HEK293T (cell line): ENCODE measurements at regions of chr11 and their contacts with region 1.

Region 1: GRCh38 chr11:66069715-66070603 is at the start of gene PACS1:
- DNase-seq: peak; percentile 72

Region 2: GRCh38 chr11:65973439-65974110 is 96.4 kb before region 1 on chr11:
- CTCF ChIA-PET with region 1: no interaction called
- POLR2A ChIA-PET with region 1: no interaction called
- DNase-seq: no peak

Region 3: DNA sequence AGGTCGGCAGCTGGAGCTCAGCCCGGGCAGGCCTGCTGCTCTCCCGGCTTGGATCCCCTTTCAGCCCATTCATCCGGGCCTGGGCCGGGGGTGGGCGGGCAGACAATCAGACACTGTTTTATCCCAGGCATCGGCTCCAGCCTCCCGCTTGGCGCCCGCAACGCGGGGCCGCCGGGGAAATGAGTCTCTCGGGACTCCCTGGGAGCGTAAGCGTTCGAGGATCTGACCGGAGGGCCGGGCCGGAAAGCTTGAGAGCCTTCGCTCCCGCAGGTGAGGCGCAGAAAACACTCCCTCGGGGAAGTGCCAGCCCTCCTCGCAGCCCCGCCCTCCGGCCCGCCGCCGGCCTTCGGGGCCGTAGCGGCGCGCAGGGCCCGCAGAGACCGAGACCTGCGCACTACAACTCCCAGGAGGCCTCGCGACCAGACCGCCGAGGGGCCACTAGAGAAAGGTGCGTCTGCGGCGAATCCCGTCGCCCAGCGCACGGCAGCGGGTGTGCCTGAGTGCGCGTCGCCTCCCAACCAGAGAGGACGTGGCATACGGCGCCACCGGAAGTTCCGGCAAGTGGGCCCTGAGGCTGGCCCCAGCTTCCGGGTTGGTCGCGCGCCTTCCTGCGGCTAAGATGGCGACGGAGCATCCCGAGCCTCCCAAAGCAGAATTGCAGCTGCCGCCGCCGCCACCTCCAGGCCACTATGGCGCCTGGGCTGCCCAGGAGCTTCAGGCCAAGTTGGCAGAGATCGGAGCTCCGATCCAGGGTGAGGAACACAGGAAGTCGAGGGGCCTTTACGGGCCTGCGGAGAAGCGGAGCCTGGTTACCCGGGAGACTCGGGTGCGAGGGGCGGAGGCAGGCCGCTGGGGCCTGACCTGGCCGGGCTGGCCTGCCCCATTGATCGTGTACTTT is 17.9 kb before region 1 on chr11 and contains the start of gene SF3B2:
- CTCF ChIA-PET with region 1: interaction called, 24 read pairs
- POLR2A ChIA-PET with region 1: interaction called, 34 read pairs
- DNase-seq: peak; percentile 96

Region 4: DNA sequence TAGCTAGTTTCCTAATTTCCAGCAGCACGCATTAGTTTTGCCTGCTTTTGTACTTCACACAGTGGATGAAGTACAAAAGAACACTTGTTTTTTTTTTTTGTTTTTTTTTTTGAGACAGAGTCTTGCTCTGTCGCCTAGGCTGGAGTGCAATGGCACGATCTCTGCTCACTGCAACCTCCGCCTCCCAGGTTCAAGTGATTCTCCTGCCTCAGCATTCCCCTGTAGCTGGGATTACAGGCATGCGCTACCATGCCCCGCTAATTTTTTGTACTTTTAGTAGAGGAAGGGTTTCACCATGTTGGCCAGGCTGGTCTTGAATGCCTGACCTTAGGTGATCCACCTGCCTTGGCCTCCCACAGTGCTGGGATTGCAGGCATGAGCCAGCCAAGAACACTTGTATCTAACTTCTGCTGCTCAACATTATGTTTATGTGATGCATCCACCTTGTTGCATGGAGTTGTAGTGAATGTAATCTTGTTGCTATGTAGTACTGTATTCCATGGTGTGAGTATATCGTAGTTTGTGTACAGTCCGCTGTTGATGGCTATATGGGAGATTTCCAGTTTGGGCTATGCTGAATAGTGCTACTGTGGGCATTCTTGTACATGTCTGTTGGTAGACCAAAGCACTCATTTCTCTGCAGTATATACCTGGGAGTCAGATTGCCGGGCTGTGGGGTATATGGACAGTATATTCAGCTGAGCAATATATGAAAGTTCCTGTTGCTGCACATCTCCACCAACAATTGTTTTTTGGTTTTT is 17.4 kb after region 1 on chr11:
- CTCF ChIA-PET with region 1: no interaction called
- POLR2A ChIA-PET with region 1: no interaction called
- DNase-seq: no peak

Region 5: GRCh38 chr11:66136752-66137123 is 66.8 kb after region 1 on chr11:
- CTCF ChIA-PET with region 1: interaction called, 11 read pairs
- POLR2A ChIA-PET with region 1: no interaction called
- DNase-seq: no peak